ENCODE measurements at regions of chr20 and their contacts with region 1.

Region 1: GRCh38 chr20:64038565-64039292 is 2.7 kb downstream of the C20orf204 start:
- DNase-seq: peak; percentile 92 to 97
- H3K4me3 ChIP-seq: peak overlapping the region; percentile 81
- H3K4me3 Mint-ChIP-seq: peak overlapping the region; percentile 87
- H3K27ac Mint-ChIP-seq: peak overlapping the region; percentile 57
- H3K4me1 ChIP-seq: peaks cover 26% of the 10 kb centered on the region
- H3K4me1 Mint-ChIP-seq: no peaks in the 10 kb centered on the region
- H3K27me3 ChIP-seq: no peaks in the 10 kb centered on the region
- H3K27me3 Mint-ChIP-seq: peaks cover 3% of the 10 kb centered on the region
- CTCF ChIP-seq: peak; percentile 83 to 96

Region 2: GRCh38 chr20:62953839-62954703 is 1084.7 kb before region 1 on chr20:
- CTCF ChIA-PET with region 1: no interaction called
- POLR2A ChIA-PET with region 1: no interaction called
- intact Hi-C with region 1: no loop called
- DNase-seq: no peak
- H3K4me3 ChIP-seq: peak overlapping the region; percentile 60
- H3K4me3 Mint-ChIP-seq: peak overlapping the region; percentile 85
- H3K27ac Mint-ChIP-seq: peak overlapping the region; percentile 93
- H3K4me1 ChIP-seq: peaks cover 45% of the 10 kb centered on the region
- H3K4me1 Mint-ChIP-seq: peaks cover 35% of the 10 kb centered on the region
- H3K27me3 ChIP-seq: no peaks in the 10 kb centered on the region
- H3K27me3 Mint-ChIP-seq: no peaks in the 10 kb centered on the region
- CTCF ChIP-seq: no peak

Region 3: DNA sequence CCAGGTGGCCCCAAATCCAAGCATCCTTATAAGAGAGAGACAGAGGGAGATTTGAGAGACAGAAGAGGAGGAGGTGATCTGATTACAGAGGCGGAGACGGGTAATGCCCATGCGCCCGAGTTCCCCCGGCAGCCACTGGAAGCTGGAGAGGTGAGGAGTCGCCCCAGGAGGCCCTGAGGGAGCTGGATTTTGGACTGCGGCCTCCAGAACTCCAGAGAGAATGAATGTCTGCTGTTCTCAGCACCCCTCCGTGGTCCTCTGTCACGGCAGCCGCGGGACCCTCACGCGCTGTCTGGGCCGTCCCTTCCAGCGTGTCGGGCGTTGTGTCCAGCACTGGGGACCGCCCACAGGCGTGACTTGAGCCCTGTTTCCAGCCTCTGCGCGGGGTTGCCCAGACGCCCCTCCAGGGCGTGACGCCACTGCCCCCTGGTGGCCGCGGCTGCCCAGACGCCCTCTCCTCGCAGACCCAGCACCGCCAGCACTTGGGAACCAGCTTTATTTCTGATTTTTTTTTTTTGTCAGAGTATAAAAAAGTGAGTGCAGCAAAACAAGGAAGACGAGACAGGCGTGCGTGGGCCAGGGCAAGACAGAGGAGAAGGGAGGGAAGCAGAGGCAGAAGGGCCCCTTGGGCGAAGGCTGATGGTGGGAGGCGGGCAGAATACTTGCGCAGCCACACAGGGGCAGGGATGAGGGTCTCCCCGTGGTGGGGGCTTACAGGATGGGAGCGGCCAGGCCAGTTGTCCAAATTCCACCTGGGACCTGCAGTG is 64.9 kb before region 1 on chr20:
- CTCF ChIA-PET with region 1: interaction called, 139 read pairs
- POLR2A ChIA-PET with region 1: no interaction called
- intact Hi-C with region 1: no loop called
- DNase-seq: peak; percentile 92 to 98
- H3K4me3 ChIP-seq: peak overlapping the region; percentile 38
- H3K4me3 Mint-ChIP-seq: peak overlapping the region; percentile 63
- H3K27ac Mint-ChIP-seq: peak overlapping the region; percentile 1
- H3K4me1 ChIP-seq: peaks cover 26% of the 10 kb centered on the region
- H3K4me1 Mint-ChIP-seq: peaks cover 22% of the 10 kb centered on the region
- H3K27me3 ChIP-seq: no peaks in the 10 kb centered on the region
- H3K27me3 Mint-ChIP-seq: peaks cover 3% of the 10 kb centered on the region
- CTCF ChIP-seq: peak; percentile 100

Region 4: DNA sequence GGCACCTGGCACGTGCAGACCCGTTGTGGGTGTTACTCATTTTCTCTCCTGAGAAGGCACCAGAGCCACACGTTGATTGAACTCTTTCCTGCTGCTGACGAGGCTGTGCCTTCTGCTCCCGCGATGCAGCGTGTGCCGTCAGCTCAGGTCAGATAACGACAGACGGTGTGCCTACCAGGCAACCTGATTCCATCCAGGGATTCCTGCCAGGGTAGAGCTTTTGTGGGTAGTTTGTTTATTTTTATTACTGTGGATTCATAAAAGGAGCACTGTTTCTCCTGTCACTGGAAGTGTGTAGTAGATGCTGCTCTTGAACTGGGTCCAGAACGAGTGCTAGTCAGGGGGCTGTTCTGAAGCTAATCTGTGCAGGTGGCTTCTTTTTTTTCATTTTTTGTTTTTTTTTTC is 37.1 kb before region 1 on chr20:
- CTCF ChIA-PET with region 1: interaction called, 27 read pairs
- POLR2A ChIA-PET with region 1: no interaction called
- intact Hi-C with region 1: no loop called
- DNase-seq: no peak
- H3K4me3 ChIP-seq: no peak overlapping the region
- H3K4me3 Mint-ChIP-seq: no peak overlapping the region
- H3K27ac Mint-ChIP-seq: no peak overlapping the region
- H3K4me1 ChIP-seq: peaks cover 14% of the 10 kb centered on the region
- H3K4me1 Mint-ChIP-seq: no peaks in the 10 kb centered on the region
- H3K27me3 ChIP-seq: no peaks in the 10 kb centered on the region
- H3K27me3 Mint-ChIP-seq: no peaks in the 10 kb centered on the region
- CTCF ChIP-seq: no peak

Region 5: GRCh38 chr20:64053841-64054661 is 15.3 kb after region 1 on chr20:
- CTCF ChIA-PET with region 1: interaction called, 101 read pairs
- POLR2A ChIA-PET with region 1: interaction called, 4 read pairs
- intact Hi-C with region 1: loop called (anchors 1 kb)
- DNase-seq: peak in 1 of 2 experiments; percentile 59
- H3K4me3 ChIP-seq: no peak overlapping the region
- H3K4me3 Mint-ChIP-seq: no peak overlapping the region
- H3K27ac Mint-ChIP-seq: no peak overlapping the region
- H3K4me1 ChIP-seq: peaks cover 17% of the 10 kb centered on the region
- H3K4me1 Mint-ChIP-seq: peaks cover 7% of the 10 kb centered on the region
- H3K27me3 ChIP-seq: no peaks in the 10 kb centered on the region; the same call in 1 of the 2 replicates
- H3K27me3 Mint-ChIP-seq: peaks cover under 1% of the 10 kb centered on the region
- CTCF ChIP-seq: peak; percentile 9 to 40

Region 6: DNA sequence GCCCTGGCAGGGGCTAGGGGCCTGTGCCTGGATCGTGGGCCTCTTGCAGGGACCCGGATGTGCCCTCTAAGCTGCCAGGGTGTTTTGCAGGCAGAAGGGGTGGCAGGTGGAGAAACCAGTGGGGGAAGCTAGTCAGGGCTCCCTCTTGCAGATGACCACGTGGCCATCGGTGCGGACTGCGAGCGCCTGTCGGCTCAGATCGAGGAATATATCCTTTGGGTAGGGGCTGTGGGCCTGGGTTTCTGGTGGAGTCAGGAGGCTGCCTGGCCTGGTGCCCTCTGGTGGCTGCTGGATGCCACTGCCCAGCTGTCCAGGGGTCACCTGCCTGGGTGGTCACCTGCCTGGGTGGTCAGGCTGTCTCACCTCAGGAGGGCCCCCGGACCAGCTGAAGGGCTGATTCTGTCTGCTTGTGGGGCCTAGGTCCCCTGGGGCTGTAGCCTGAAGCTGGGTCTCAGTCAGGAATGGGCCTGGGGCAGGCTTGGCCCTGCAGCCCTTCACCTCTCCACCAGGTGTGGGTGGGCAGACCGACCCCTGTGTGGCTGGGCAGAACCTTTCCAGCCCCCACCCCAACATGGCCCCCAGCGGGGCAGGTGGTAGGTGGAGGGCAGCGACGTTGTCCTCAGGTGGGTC is 31.0 kb after region 1 on chr20:
- CTCF ChIA-PET with region 1: interaction called, 12 read pairs
- POLR2A ChIA-PET with region 1: interaction called, 3 read pairs
- intact Hi-C with region 1: loop called (anchors 1 kb)
- DNase-seq: peak; percentile 84 to 88
- H3K4me3 ChIP-seq: no peak overlapping the region
- H3K4me3 Mint-ChIP-seq: no peak overlapping the region
- H3K27ac Mint-ChIP-seq: no peak overlapping the region
- H3K4me1 ChIP-seq: no peaks in the 10 kb centered on the region
- H3K4me1 Mint-ChIP-seq: peaks cover 12% of the 10 kb centered on the region
- H3K27me3 ChIP-seq: no peaks in the 10 kb centered on the region
- H3K27me3 Mint-ChIP-seq: no peaks in the 10 kb centered on the region
- CTCF ChIP-seq: peak; percentile 99

Region 7: GRCh38 chr20:64119681-64120341 is 81.1 kb after region 1 on chr20:
- CTCF ChIA-PET with region 1: interaction called, 51 read pairs
- POLR2A ChIA-PET with region 1: no interaction called
- intact Hi-C with region 1: loop called (anchors 1 kb)
- DNase-seq: peak in 1 of 2 experiments; percentile 55
- H3K4me3 ChIP-seq: no peak overlapping the region
- H3K4me3 Mint-ChIP-seq: no peak overlapping the region
- H3K27ac Mint-ChIP-seq: peak overlapping the region; percentile 44
- H3K4me1 ChIP-seq: no peaks in the 10 kb centered on the region
- H3K4me1 Mint-ChIP-seq: no peaks in the 10 kb centered on the region
- H3K27me3 ChIP-seq: no peaks in the 10 kb centered on the region
- H3K27me3 Mint-ChIP-seq: peaks cover 14% of the 10 kb centered on the region
- CTCF ChIP-seq: no peak

Region 8: DNA sequence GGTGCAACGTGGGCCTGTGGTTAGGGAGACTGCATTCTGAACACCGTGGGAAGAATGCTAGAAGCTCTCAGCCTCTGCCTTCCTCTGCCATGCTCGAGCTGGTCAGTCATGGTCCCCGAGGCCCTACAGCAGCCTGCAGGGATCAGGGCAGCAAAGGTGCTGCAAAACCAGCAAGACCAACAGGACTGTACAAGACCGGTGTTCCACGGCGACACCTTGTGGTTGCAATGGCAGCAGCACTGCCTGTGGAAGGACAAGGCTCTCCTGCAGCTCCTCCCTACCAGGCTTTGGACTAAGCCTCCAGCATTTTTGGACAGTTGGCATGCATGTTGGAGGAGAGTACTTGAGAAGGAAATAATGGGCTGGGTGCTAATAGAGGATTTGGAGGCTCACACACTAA is 106.7 kb after region 1 on chr20:
- CTCF ChIA-PET with region 1: no interaction called
- POLR2A ChIA-PET with region 1: no interaction called
- intact Hi-C with region 1: no loop called
- DNase-seq: peak; percentile 54 to 60
- H3K4me3 ChIP-seq: no peak overlapping the region
- H3K4me3 Mint-ChIP-seq: no peak overlapping the region
- H3K27ac Mint-ChIP-seq: no peak overlapping the region
- H3K4me1 ChIP-seq: no peaks in the 10 kb centered on the region
- H3K4me1 Mint-ChIP-seq: peaks cover 5% of the 10 kb centered on the region
- H3K27me3 ChIP-seq: no peaks in the 10 kb centered on the region; the same call in 1 of the 2 replicates
- H3K27me3 Mint-ChIP-seq: peaks cover 12% of the 10 kb centered on the region
- CTCF ChIP-seq: peak; percentile 21 to 28